Gastrocnemius medialis (tissue), 4 donors: ENCODE measurements at regions of chr2 and their contacts with region 1.

Region 1: GRCh38 chr2:65264821-65265670 is 37.4 kb downstream of the ACTR2 start:
- DNase-seq: no peak
- ATAC-seq: peak; percentile 56 to 75
- H3K4me3 ChIP-seq: no peak overlapping the region
- H3K27ac ChIP-seq: no peak overlapping the region
- H3K4me1 ChIP-seq: peaks cover 2 to 14% of the 10 kb centered on the region in 2 donors
- H3K27me3 ChIP-seq: no peaks in the 10 kb centered on the region
- CTCF ChIP-seq: peak; percentile 55 to 68 (median 65)
- POLR2A ChIP-seq: no peak

Region 2: DNA sequence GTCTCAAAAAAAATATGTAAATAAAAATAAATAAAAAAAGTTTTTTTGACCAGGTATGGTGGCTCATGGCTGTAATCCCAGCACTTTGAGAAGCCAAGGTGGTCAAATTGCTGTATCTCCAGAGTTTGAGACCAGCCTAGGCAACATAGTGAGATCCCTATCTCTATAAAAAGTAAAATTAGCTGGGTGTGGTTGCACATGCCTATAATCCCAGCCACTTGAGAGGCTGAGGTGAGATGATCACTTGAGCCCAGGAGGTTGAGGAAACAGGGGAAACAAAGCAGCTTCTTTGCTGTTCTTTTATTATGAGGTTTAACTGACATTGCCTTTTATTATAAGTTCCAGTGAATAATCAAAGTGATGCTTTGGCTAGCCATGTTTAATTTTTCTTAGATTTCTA is 12.4 kb before region 1 on chr2:
- in situ Hi-C with region 1: no loop called
- intact Hi-C with region 1: no loop called
- DNase-seq: no peak
- ATAC-seq: no peak
- H3K4me3 ChIP-seq: no peak overlapping the region
- H3K27ac ChIP-seq: no peak overlapping the region
- H3K4me1 ChIP-seq: no peaks in the 10 kb centered on the region
- H3K27me3 ChIP-seq: no peaks in the 10 kb centered on the region
- CTCF ChIP-seq: no peak
- POLR2A ChIP-seq: no peak

Region 3: DNA sequence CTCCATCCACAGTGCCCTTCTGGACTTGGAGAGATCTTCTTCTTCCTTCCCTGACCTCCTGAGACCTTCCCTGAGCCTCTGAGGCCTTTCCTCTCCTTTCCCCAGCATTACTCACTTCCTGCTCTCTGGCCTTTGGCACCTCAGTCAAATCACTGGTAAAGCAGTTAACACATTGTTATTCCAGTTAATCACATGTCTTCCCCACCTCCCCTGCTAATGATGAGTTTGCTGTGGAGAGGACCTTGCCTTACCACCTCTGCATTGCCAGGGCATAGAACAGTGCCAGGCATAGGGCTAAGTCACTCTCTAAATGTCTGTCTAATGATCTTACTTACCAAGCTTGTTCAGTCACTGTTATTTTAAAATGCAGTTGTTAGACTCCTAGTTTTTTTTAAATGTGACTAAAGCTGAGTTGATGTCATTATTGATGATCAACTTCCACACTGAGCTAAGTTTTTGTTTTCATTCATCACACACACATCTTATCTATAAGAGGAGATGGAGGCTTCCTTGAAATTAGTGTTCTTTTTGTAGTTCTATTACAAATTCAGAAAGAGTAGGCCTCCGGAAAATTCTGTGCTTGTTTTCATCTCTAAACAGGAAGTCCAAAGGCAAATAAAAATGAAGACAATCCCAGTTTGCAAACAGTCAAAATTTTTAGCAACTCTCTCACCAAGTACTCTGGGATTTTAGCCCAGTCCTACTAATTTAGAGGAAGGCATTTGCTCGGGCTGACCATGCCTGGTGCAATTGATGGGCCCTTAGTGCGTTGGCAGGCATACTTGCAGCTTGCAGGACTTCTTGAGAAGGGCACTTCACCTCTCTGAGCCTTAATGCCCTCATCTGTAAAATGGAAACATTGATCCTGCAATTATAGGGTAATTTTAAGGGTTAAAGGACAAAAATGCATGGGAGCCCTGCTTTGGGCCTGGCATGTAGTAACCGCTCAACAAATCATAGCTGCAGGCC is 281.1 kb after region 1 on chr2:
- in situ Hi-C with region 1: loop called (anchors 5 to 10 kb)
- intact Hi-C with region 1: no loop called
- DNase-seq: no peak
- ATAC-seq: peak; percentile 46 to 52
- H3K4me3 ChIP-seq: no peak overlapping the region
- H3K27ac ChIP-seq: peak overlapping the region; percentile 24 to 57 (median 44)
- H3K4me1 ChIP-seq: peaks cover 0 to 8% of the 10 kb centered on the region in 2 donors
- H3K27me3 ChIP-seq: no peaks in the 10 kb centered on the region
- CTCF ChIP-seq: no peak
- POLR2A ChIP-seq: no peak

Region 4: GRCh38 chr2:65554765-65555591 is 289.9 kb after region 1 on chr2:
- in situ Hi-C with region 1: loop called in 3 of 4 experiments (anchors 5 to 10 kb)
- intact Hi-C with region 1: loop called (anchors 1 kb)
- DNase-seq: no peak
- ATAC-seq: no peak
- H3K4me3 ChIP-seq: no peak overlapping the region
- H3K27ac ChIP-seq: no peak overlapping the region
- H3K4me1 ChIP-seq: peaks cover 0 to 5% of the 10 kb centered on the region in 2 donors
- H3K27me3 ChIP-seq: no peaks in the 10 kb centered on the region
- CTCF ChIP-seq: no peak
- POLR2A ChIP-seq: no peak

Region 5: GRCh38 chr2:65576861-65577601 is 312.0 kb after region 1 on chr2:
- in situ Hi-C with region 1: no loop called
- intact Hi-C with region 1: loop called (anchors 1 kb)
- DNase-seq: no peak
- ATAC-seq: no peak
- H3K4me3 ChIP-seq: no peak overlapping the region
- H3K27ac ChIP-seq: no peak overlapping the region
- H3K4me1 ChIP-seq: peaks cover 0 to 7% of the 10 kb centered on the region in 2 donors
- H3K27me3 ChIP-seq: no peaks in the 10 kb centered on the region
- CTCF ChIP-seq: no peak
- POLR2A ChIP-seq: no peak